Activated CD4-positive, alpha-beta memory T cell treated with anti-CD3 and anti-CD28 coated beads, Interleukin-2, amount 10 ng/mL, durations not matched to agents 7 days and 5 days (primary cell): ENCODE measurements at regions of chr5 and their contacts with region 1.

Region 1: DNA sequence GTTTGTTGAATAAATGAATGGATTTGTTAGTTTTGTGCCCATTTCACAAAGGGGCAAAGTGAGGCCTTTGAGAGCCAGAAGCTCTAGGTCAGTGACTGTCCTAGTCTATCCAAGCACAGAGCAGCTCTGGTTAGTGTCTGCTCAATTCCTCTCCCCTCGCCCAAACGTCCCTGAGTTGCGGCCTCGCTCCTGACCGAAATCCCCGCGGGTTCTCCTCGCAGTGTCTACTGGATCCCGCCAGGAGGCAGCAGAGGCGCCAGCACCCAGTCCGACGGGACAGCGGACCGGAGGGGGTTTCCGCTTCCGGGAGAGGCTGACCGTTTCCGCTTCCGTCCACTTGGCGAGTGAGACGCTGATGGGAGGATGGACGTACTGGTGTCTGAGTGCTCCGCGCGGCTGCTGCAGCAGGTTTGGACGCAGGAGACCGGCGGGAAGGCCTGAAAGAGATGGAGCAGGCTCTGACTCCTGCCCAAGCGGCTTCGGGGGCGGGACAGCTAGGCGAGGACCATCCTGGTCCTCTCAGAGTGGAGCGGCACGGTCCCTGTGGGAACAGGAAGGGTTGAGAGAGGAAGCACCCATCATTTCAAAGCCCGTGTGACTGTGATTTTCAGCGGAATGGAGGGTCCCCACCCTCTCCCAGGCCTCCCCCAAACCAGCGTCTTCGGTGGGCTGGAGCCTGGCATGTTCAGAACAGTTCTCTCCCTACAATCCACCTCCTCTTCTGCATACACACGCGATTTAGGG is at the start of gene RARS1:
- DNase-seq: peak; percentile 92
- H3K4me3 Mint-ChIP-seq: peak within 1 kb of the TSS; percentile 98
- H3K27ac Mint-ChIP-seq: peak within 1 kb of the TSS; percentile 82
- H3K4me1 Mint-ChIP-seq: peaks cover 41% of the 10 kb centered on the region
- H3K27me3 Mint-ChIP-seq: no peaks in the 10 kb centered on the region
- total RNA-seq, gene RARS1: 62.0 to 65.8 TPM

Region 2: GRCh38 chr5:168268949-168269943 is 217.1 kb before region 1 on chr5:
- CTCF ChIA-PET with region 1: interaction called, 10 read pairs
- POLR2A ChIA-PET with region 1: no interaction called
- DNase-seq: peak; percentile 68
- H3K4me3 Mint-ChIP-seq: no peak overlapping the region
- H3K27ac Mint-ChIP-seq: no peak overlapping the region
- H3K4me1 Mint-ChIP-seq: peaks cover 11% of the 10 kb centered on the region
- H3K27me3 Mint-ChIP-seq: peaks cover 24% of the 10 kb centered on the region

Region 3: GRCh38 chr5:168502563-168503237 is 16.4 kb after region 1 on chr5:
- CTCF ChIA-PET with region 1: no interaction called
- POLR2A ChIA-PET with region 1: no interaction called
- DNase-seq: no peak
- H3K4me3 Mint-ChIP-seq: no peak overlapping the region
- H3K27ac Mint-ChIP-seq: no peak overlapping the region
- H3K4me1 Mint-ChIP-seq: no peaks in the 10 kb centered on the region
- H3K27me3 Mint-ChIP-seq: no peaks in the 10 kb centered on the region

Region 4: DNA sequence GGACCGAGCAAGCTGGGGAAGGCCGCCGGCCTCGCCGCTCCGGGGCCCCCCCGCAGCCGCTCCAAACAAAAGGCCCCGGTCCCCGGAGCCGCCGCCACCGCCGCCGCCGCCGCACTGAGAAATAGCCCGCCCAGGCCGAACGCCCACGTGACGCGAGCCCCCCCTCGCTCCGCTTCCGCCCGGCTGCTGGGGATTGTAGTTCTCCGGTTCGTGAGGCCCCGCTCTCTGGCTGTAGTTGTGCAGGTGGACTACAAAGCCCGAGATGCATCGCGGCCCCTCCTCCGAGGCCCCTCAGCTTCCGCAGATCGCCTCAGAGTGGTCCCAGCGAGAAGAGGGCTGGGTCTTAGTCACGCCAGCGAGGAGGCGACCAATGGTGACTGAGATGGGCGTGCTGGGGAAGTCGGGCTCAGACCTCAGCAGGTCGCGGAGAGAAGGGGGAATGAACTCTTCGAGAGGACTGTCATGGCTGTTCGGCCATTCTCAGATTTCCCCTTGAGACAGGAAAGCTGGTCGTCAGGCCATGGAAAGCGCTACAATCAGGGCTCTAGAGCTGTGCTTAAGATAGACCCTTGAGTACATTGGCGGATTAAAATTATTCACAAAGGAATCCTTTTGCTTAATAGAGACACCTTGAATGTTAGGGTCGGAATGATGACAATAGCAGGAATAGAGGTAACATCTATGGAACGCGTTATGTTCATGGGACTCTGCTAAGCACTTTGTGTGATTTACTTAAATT is 93.3 kb after region 1 on chr5:
- CTCF ChIA-PET with region 1: interaction called, 3 read pairs
- POLR2A ChIA-PET with region 1: interaction called, 15 read pairs
- DNase-seq: peak; percentile 98
- H3K4me3 Mint-ChIP-seq: peak overlapping the region; percentile 84
- H3K27ac Mint-ChIP-seq: peak overlapping the region; percentile 95
- H3K4me1 Mint-ChIP-seq: peaks cover 30% of the 10 kb centered on the region
- H3K27me3 Mint-ChIP-seq: no peaks in the 10 kb centered on the region